A549 (cell line): ENCODE measurements at regions of chrX and their contacts with region 1.

Region 1: DNA sequence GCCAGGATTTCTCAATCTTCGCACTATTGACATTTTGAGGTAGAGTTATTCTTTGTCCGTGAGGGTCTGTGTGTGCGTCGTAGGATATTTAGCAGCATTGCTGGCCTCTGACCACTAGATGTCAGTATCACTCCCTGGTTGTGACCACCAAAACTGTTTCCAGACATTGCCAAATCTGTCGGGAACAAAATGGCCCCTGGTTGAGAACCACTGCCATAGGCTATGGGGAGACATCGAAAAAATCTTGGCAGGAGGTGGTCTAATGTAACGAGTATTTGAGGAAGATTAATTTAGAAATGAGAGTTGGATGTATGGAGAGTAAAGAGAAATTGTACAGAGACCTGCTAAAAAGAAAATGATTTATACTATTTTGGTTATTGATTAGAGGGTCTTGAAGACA is 108.4 kb downstream of the DOCK11 start:
- DNase-seq: peak; percentile 53 to 69
- ATAC-seq: peak; percentile 89 to 94
- H3K4me3 ChIP-seq: 0 out of 3 replicates have a peak overlapping the region, but pooled peaks have one; percentile 16
- H3K27ac ChIP-seq: no peak overlapping the region
- H3K4me1 ChIP-seq: peaks cover 4% of the 10 kb centered on the region; the same call in 2 of the 3 replicates
- CTCF ChIP-seq: peak; percentile 73
- EP300 ChIP-seq: no peak
- POLR2A ChIP-seq: no peak
- RAD21 ChIP-seq: peak; percentile 71 to 72

Region 2: GRCh38 chrX:118459494-118459893 is 144.5 kb before region 1 on chrX:
- CTCF ChIA-PET with region 1: interaction called, 104 read pairs
- POLR2A ChIA-PET with region 1: interaction called, 5 read pairs
- DNase-seq: peak; percentile 20 to 47
- ATAC-seq: peak; percentile 78 to 90
- H3K4me3 ChIP-seq: no peak overlapping the region
- H3K27ac ChIP-seq: no peak overlapping the region
- H3K4me1 ChIP-seq: no peaks in the 10 kb centered on the region
- CTCF ChIP-seq: peak; percentile 65
- EP300 ChIP-seq: no peak
- POLR2A ChIP-seq: no peak
- RAD21 ChIP-seq: peak; percentile 74 to 82

Region 3: DNA sequence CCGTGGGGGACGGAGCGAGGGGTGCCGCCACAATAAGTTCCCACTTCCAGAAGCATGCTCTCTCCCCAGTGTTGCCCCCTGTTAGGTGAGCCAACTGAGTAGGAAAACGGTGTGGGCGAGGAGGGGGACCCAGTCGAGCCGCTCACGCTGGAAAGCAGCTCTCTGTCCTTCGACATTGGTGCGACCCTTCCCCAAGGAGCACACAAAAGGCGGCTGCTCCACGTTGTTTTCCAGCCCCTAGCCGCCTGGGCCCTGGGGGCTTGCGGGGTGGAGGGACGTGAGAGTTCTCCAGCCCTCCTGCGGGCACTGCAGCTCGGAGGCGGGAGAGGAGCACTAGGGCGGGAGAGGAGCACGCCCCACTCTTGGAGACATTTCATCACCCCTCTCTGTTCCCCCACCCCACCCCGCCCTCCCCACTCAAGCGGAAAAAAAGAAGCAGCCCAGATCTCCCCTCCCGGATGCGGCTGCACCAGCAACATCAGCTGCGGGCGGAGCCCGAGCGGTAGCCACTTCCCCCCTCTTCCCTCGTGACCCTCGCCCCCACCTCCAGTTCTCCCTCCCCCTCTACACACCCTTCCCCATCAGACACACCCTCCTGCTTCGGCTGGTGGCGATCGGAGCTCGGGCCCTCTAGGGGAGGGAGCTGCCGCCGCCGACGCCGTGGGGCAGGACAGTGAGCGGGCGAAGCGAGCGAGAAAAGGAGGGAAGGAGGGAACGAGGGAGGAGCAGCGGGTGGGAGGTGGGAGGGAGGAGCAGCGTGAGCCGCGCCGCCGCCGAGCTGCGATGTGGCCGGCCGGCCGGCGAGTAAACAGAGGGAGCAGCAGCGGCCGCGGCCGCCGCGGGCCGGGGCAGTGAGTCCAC is 108.7 kb before region 1 on chrX and contains the start of gene DOCK11:
- CTCF ChIA-PET with region 1: interaction called, 10 read pairs
- POLR2A ChIA-PET with region 1: interaction called, 8 read pairs
- DNase-seq: peak; percentile 35 to 77
- ATAC-seq: peak; percentile 85 to 91
- H3K4me3 ChIP-seq: peak within 1 kb of the TSS; percentile 66
- H3K27ac ChIP-seq: peak within 1 kb of the TSS; percentile 66 to 91
- H3K4me1 ChIP-seq: peaks cover 10% of the 10 kb centered on the region; the same call in 2 of the 3 replicates
- CTCF ChIP-seq: no peak
- EP300 ChIP-seq: no peak
- POLR2A ChIP-seq: no peak; the same call in 1 of the 2 replicates
- RAD21 ChIP-seq: no peak
- polyA plus RNA-seq, gene DOCK11: 8.7 and 9.5 TPM in 2 replicates

Region 4: GRCh38 chrX:118569676-118570075 is 34.3 kb before region 1 on chrX:
- CTCF ChIA-PET with region 1: no interaction called
- POLR2A ChIA-PET with region 1: no interaction called
- DNase-seq: no peak
- ATAC-seq: no peak
- H3K4me3 ChIP-seq: no peak overlapping the region
- H3K27ac ChIP-seq: no peak overlapping the region
- H3K4me1 ChIP-seq: 0 out of 3 replicates have a peak, but pooled peaks cover 4% of the 10 kb centered on the region
- CTCF ChIP-seq: no peak
- EP300 ChIP-seq: no peak
- POLR2A ChIP-seq: no peak
- RAD21 ChIP-seq: no peak

Region 5: DNA sequence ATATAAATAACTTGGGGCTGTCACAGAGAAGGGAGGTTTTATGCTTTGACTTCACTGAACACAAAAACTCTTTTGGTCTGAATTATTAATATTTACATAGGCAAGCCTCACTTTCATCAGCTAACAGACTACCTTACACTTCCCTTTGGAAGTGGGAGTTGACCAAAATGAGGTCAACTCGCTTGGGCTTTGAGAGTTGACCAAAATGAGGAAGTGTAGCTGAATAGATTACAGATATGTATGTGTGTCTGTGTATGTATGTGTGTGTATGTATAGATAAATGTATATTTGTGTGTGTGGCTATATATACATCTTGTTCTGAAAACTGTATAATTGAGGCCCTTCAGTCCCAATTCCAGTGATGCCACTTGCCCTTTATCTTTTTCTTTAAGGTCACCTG is 10.2 kb after region 1 on chrX:
- CTCF ChIA-PET with region 1: interaction called, 42 read pairs
- POLR2A ChIA-PET with region 1: interaction called, 3 read pairs
- DNase-seq: no peak
- ATAC-seq: no peak
- H3K4me3 ChIP-seq: no peak overlapping the region
- H3K27ac ChIP-seq: no peak overlapping the region
- H3K4me1 ChIP-seq: no peaks in the 10 kb centered on the region
- CTCF ChIP-seq: no peak
- EP300 ChIP-seq: no peak
- POLR2A ChIP-seq: no peak
- RAD21 ChIP-seq: no peak

Region 6: DNA sequence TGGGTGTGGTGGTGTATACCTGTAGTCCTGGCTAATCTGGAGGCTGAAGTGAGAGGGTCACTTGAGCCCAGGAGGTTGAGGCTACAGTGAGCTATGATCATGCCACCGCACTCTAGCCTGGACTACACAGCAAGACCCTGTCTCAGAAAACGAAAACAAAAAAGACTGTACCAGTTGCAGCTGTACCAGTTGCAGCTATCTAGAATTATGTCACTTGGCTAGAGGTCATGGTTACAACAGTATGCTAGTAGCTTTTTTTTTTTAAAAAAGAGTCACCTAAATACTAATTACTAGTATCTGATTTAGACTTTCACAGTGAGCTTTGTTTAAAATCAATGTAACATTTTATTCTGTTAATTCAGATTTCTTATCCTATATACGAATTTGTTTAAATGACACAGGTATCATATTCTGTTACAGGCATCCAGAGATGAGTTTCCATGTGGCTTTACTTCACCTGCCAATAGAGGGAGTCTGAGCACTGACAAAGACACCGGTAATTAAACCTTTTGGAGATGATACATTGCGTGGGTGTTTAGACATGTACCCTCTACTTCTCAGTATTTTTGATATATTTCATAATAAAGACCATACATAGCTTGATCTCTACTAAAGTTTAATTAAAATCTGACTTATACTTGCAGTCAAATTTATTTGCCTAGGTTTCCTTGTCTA is 23.2 kb after region 1 on chrX:
- CTCF ChIA-PET with region 1: interaction called, 12 read pairs
- POLR2A ChIA-PET with region 1: no interaction called
- DNase-seq: peak; percentile 22 to 31
- ATAC-seq: peak; percentile 66 to 81; a peak in 5 of 6 replicates
- H3K4me3 ChIP-seq: no peak overlapping the region
- H3K27ac ChIP-seq: no peak overlapping the region
- H3K4me1 ChIP-seq: no peaks in the 10 kb centered on the region
- CTCF ChIP-seq: peak; percentile 62
- EP300 ChIP-seq: no peak
- POLR2A ChIP-seq: no peak
- RAD21 ChIP-seq: peak; percentile 54 to 71; a peak in 4 of 5 replicates